ENCODE measurements at regions of chr17 and their contacts with region 1.

Region 1: DNA sequence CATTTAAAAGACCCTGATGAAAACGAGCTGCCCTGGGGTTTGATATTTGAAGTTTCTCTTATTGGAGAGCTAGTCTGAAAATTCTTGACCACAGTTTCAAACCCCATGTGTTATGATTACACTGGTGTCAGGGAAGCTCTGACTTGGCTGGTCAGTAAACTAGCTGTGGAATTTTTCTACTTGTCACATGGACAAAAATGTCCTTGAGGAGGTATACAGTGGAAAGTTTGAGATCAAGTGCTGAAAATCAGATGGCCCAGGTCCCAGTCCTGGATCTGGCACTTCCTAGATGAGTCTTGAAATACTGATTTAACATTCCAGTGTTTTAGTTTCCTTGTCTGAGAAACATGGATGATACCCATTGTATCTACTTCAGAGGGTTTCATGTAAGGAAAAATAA is 30.7 kb upstream of the SOX9 start:
- DNase-seq: no peak
- H3K4me3 ChIP-seq: no peak overlapping the region
- H3K27ac ChIP-seq: no peak overlapping the region
- H3K4me1 ChIP-seq: no peaks in the 10 kb centered on the region
- H3K27me3 ChIP-seq: peaks cover 7% of the 10 kb centered on the region; the same call in 1 of the 2 replicates
- CTCF ChIP-seq: no peak
- EP300 ChIP-seq: no peak
- RAD21 ChIP-seq: no peak

Region 2: GRCh38 chr17:72077326-72077960 is 12.7 kb before region 1 on chr17:
- CTCF ChIA-PET with region 1: interaction called, 10 read pairs
- POLR2A ChIA-PET with region 1: no interaction called
- DNase-seq: no peak
- H3K4me3 ChIP-seq: no peak overlapping the region
- H3K27ac ChIP-seq: no peak overlapping the region
- H3K4me1 ChIP-seq: no peaks in the 10 kb centered on the region; a peak in 1 of 4 replicates
- H3K27me3 ChIP-seq: no peaks in the 10 kb centered on the region
- CTCF ChIP-seq: peak; percentile 19; the same call in 1 of the 2 replicates
- EP300 ChIP-seq: no peak
- RAD21 ChIP-seq: no peak

Region 3: GRCh38 chr17:72191921-72192799 is 102.1 kb after region 1 on chr17:
- CTCF ChIA-PET with region 1: no interaction called
- POLR2A ChIA-PET with region 1: no interaction called
- DNase-seq: no peak
- H3K4me3 ChIP-seq: no peak overlapping the region
- H3K27ac ChIP-seq: no peak overlapping the region
- H3K4me1 ChIP-seq: no peaks in the 10 kb centered on the region
- H3K27me3 ChIP-seq: no peaks in the 10 kb centered on the region
- CTCF ChIP-seq: no peak
- EP300 ChIP-seq: 0 out of 4 replicates have a peak, but pooled peaks of 1 of the 2 experiments have one; percentile 37
- RAD21 ChIP-seq: no peak